GM10248 (cell line): ENCODE measurements at regions of chr15 and their contacts with region 1.

Region 1: DNA sequence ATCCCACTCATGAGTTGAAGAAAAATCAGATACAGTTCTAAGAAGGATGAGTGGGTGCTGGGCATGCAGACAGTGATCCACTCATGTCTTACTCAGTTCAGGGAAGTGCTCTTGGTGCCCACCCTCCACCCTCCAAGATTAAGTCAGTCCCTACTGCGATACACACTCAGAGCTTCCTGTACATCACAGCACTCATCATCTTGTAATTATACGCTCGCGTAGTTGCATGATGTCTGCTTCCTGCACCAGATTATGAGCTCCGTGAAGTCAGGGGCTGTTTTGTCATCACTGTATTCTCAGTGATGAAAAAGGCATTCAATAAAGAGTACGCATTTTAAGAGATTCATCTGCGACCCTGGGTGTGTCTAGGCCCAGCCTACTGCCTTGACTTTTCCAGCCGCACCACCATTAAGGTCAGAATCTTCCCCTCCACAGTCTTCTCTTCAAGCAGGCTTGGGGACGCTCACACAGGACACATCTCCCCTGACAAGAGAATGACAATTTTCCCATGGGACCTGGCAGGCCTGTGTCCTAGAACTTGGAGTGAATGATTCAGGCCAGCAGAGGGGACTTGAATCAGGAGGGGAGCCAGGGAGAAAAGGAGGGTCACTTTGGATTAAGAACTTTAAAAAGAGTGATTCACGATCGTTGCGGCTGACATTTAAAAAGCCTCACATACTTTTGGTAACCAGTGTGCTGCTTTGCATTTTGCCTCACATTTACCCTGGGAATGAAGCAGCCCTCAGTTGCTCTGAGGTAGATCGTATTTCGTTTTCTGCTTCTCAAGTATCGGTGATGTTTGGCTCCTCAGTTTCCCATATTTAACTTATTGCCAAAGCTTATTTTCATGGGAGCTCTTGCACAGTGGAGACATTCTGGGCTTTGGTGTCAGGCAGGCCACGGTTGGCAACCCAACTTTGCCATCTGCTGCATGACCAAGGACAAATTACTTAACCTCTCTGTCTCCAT is 7.9 kb upstream of the PDE8A start:
- DNase-seq: no peak
- CTCF ChIP-seq: no peak

Region 2: DNA sequence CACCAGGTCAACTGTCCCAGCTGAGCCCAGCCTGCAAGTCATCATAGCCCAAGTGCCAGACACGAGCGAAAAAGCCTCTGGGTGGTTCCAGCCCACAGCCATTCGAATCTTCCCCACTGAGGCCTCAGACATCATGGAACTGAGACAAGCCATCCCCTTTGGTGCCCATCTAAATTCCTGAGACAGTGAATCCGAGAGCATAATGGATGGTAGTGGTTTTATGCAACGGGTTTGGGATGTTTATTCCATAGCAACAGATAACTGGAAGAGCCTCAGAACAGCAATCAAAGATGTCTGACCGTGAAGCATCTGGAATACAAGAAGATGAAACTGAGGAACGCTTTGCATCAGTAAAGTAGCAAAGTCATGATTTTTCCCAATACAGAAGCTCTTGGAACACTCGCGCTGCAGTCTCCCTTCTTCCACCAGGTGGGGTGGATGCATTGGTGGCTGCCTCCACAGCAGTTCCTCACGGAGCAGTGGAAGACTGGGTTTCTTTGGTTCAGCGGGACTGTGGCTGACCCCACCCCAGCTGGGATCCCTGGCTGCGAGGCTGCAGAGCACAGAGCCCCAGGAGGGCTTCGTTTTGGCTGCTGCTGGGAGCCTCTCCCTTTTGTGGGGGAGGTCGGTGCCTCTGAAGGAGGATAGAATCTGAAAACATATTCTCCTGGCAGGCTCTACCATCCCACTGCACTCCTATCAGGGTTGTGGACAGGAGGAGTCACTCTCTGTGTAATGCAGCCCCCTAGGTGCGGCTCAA is 18.5 kb before region 1 on chr15:
- CTCF ChIA-PET with region 1: interaction called, 11 read pairs
- POLR2A ChIA-PET with region 1: no interaction called
- DNase-seq: peak; percentile 64
- CTCF ChIP-seq: peak; percentile 74